Dorsolateral prefrontal cortex (tissue), 120 donors: ENCODE measurements at regions of chr17 and their contacts with region 1.

Region 1: GRCh38 chr17:58556833-58557250 is 42.4 kb upstream of the MTMR4 start:
- DNase-seq: peak in 1 of 10 donors; percentile 39
- H3K4me3 ChIP-seq: peak overlapping the region in 6 of 59 donors; percentile 2 to 27 (median 12)
- H3K27ac ChIP-seq: peak overlapping the region; percentile 57 to 96 (median 86)
- H3K27me3 ChIP-seq: no peaks in the 10 kb centered on the region
- CTCF ChIP-seq: no peak

Region 2: GRCh38 chr17:58492238-58493121 is 64.4 kb before region 1 on chr17:
- intact Hi-C with region 1: no loop called
- DNase-seq: no peak
- H3K4me3 ChIP-seq: no peak overlapping the region
- H3K27ac ChIP-seq: peak overlapping the region in 1 of 59 donors; percentile 2
- H3K27me3 ChIP-seq: no peaks in the 10 kb centered on the region
- CTCF ChIP-seq: no peak

Region 3: DNA sequence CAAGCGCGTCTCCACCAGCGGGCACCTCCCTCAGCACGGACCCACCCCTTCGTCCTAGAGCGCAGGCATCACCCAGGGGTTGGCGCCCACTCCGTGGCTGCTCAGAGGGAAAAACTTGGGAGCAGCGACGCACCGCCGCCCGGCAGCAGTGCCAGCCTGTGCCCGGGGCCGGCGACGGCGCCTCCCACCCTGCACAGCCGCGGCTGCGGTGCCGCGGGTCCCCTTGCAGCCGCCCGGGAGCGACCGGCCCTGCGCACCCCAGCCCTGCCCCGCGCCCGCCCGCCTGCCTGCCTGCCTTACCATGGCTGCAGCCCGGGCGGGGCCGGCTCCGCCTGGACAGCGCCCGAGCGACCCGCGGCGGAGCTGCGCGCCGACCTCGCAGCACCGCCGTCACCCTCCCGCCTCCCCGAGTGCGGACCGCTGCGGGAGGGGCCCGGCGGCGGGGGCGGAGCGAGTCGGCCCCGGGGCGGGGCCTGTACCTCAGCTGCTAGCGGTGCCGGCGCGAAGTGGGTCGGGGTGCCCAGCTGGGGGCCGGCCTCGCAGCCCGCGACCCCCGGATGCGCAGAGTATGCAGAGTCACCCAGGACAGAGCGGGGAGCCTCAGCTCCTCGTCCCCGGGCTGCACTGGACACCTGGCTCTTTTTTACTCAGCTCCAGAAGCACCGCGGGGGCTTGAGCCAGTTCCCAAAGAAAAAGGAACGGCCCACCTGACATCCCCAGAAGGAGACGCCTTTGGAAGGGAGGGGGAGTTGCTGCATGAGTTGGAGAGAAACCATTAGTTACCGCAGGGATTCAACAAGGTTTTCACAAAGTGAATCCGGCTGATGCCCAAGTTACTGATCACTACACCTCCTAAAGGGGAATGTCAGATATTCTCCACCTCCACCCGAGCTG is 24.9 kb before region 1 on chr17:
- intact Hi-C with region 1: loop called (anchors 2 kb)
- DNase-seq: peak; percentile 67 to 91 (median 81)
- H3K4me3 ChIP-seq: peak overlapping the region; percentile 64 to 93 (median 81)
- H3K27ac ChIP-seq: peak overlapping the region; percentile 85 to 100 (median 99)
- H3K27me3 ChIP-seq: no peaks in the 10 kb centered on the region
- CTCF ChIP-seq: peak in 2 of 56 donors; percentile 11 to 16

Region 4: DNA sequence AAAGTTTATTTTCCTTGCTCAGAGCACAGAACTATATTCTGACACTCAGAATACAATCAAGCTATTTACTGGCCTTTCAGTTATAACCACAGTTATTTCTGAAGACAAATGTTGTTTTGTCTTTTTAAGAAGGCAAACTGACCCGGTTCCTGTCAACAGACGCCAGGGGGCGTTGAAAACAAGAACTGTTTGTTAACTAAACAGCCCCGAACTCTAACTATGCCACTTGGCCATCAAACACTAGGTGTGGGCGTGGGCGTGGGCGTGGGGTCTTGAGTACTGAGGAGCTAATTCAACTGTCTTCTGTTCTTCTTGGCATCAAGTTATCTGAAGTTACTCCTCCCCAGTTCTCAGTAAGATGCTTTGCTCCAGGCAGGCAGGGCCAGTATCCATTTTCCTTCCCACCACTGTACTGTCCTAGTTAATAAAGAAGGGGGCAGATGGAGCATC is 20.8 kb after region 1 on chr17:
- intact Hi-C with region 1: loop called in 1 of 2 experiments (anchors 2 kb)
- DNase-seq: peak; percentile 42 to 86 (median 76)
- H3K4me3 ChIP-seq: peak overlapping the region in 11 of 59 donors; percentile 0 to 37 (median 11)
- H3K27ac ChIP-seq: peak overlapping the region in 58 of 59 donors; percentile 45 to 97 (median 85)
- H3K27me3 ChIP-seq: no peaks in the 10 kb centered on the region
- CTCF ChIP-seq: peak; percentile 49 to 89 (median 69)